ENCODE measurements at regions of chr12 and their contacts with region 1.

Region 1: DNA sequence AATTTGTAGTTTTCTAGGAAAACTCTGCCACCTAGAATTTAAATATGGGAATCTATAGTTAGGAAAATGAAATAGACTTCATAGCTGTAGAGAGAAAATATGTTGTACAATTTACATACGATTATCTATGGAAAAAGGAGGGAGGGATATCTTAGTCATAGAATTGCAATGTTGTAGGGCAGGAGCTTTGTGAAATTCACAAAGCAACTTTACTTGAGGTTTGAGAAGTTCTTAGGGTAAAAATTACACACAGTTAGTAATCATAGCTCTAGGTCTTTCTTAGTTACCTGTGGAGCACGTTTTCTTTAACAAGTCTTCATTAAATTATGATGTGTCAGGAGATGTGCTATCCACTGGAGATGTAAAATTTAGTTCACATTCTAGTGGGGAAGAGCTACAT is 61.4 kb upstream of the DBX2 start:
- H3K4me3 Mint-ChIP-seq: no peak overlapping the region
- H3K27ac Mint-ChIP-seq: no peak overlapping the region
- H3K4me1 Mint-ChIP-seq: no peaks in the 10 kb centered on the region
- H3K27me3 Mint-ChIP-seq: no peaks in the 10 kb centered on the region

Region 2: DNA sequence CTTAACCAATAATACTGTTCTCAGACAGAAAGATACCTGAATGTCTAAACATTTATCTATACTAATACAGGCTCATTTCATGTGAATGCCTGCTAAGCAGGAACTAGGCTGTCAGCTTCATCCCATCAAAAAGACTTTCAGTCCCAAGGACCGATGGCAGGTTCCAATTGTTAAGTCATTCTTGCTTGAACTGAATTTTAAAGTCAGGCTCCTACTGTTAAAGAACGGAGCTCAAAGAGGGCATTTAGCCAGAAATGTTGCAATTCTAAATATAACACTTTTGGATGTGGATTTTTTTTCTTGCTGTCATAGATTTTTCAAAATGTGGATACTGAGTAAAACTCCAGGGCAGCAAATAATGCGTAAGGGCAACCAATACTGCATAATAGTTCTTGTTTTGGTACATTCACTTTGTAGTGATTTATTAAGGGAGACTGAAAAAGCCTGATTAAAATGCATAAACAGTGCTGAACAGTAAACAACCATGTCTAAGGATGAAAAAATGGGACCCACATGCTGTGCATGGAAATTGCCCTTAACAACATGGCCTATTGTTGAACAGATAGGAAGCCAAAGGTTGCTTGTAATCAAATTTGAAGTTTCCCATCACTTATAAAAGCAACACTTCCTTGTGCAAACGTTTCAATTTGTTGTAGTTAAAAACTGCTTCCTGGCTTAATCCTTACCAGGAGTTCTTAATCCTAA is 22.7 kb before region 1 on chr12:
- intact Hi-C with region 1: loop called (anchors 1 kb)
- H3K4me3 Mint-ChIP-seq: no peak overlapping the region
- H3K27ac Mint-ChIP-seq: no peak overlapping the region
- H3K4me1 Mint-ChIP-seq: no peaks in the 10 kb centered on the region
- H3K27me3 Mint-ChIP-seq: no peaks in the 10 kb centered on the region

Region 3: DNA sequence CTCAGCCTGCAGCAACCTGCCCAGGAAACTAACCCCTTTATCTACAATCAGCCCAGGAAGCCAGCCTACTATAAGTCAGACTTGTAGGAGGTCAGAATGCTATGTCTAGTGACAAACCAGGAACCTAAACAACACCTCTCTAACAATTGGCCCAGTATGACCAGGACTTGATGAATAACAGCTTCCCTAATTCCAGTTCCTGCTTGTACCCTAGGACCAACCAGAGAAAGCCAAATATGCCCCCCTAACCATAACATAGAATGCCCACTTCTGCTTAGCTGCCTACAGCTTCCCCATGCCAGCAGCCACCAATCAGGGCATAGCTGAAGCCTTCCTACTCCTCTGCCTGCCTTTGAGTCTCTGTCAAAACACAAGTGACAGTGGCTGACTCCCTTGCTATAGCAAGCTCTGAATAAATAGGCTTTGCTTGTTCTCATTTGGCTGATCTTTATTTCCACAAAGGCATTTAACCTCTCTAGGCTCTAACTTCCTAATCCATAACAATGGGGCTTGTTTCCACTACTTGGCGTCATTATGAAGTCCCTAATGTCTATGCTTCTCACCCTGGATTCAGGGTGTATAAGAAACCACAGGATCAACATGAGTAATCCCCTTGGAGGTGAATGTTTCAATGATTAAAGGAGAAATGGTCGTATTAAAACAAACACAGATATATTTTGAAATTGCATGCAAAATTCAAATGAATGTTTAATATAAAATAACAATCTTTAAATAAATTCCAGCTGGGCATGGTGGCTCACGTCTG is 323.8 kb after region 1 on chr12:
- intact Hi-C with region 1: no loop called
- H3K4me3 Mint-ChIP-seq: no peak overlapping the region
- H3K27ac Mint-ChIP-seq: peak overlapping the region; percentile 83
- H3K4me1 Mint-ChIP-seq: peaks cover 26% of the 10 kb centered on the region
- H3K27me3 Mint-ChIP-seq: no peaks in the 10 kb centered on the region